Ascending aorta (tissue), 2 donors: ENCODE measurements at regions of chr2 and their contacts with region 1.

Region 1: DNA sequence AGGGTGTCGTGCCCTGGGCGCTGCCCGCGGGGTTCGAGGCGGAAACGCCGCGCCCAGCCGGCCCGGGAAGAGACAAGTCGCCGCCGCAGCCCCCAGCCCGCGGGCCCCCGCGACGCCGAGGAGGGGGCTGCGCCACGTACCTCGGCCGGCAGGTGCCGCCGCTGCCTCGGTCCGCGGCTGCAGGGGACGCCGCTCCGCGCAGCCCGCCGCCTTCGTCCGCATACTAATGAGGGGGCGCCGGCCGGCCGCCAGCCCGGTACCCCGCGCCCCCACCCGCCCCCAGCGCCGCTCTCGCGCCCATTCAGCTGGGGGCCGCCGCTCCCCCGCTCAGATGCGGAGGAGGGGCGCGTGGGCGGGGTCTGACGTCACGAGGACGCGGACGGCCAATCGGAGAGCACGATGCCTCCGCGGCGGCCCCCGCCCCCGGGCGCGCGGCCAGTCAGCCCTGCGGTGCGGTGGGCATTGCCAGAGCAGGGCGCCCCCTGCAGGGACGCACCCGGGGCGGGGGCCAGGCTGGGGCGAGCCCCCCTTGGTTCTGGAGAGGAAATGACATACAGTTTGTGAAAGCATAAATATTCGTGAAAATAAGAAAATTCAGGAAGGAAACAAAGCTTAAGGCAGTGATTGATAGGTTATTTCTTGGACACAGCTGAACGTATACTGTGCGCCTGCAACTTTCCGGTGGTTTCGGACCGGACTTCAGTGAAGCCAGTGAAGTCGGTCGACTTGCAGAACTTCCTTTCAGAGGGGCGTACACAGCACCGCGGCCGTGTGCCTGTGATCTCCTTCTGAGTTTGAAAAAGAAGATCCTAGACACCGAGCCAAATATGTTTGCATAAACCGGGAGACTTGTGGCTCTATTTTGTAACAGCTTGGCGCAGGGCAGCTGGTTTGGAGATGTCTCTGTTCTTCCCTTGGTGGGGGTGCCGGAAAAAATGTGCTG is at the start of gene ST3GAL5:
- DNase-seq: peak; percentile 52 to 94
- H3K4me3 ChIP-seq: peak within 1 kb of the TSS; percentile 85 to 95
- H3K27ac ChIP-seq: peak within 1 kb of the TSS; percentile 85 to 88
- H3K4me1 ChIP-seq: peaks cover 4 to 36% of the 10 kb centered on the region in 2 donors
- H3K27me3 ChIP-seq: no peaks in the 10 kb centered on the region
- CTCF ChIP-seq: peak; percentile 57 to 72 (median 58)
- total RNA-seq, gene ST3GAL5: 21.0 TPM

Region 2: DNA sequence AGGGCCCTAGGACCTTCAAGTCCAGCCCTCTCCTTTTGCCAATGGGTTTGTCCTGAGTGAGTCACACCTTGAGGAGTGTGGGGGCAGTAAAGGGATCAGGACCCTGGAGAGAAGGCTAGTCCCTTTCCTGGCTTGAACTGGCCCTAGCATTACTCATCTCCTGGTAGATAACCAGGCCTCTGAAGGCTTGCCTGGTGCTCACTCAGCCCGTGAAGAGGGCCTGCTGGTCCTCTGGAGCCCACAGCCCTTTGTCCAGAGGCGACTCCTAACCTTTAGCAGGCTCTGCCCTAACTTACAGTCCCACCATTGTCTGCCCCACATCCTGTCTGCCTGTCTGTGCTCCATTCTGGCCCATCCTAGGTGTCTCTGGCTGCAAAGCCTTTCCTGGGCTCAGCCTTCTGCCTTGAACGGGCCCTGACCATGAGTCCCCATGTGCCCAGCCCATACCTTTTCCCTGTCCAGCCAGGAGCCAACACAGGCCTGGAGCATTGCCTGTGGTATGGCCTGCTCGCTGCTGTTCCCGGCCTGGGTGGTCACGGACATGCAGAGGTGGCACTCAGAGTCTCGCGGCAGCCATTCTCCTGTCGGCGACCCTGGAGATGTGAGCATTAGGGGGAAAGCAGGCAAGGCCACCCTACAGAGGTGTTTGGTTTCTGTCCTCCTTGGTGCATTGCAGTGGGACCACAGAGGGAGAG is 225.9 kb before region 1 on chr2:
- intact Hi-C with region 1: no loop called
- DNase-seq: peak in 1 of 2 donors; percentile 82
- H3K4me3 ChIP-seq: no peak overlapping the region
- H3K27ac ChIP-seq: peak overlapping the region; percentile 36 to 42
- H3K4me1 ChIP-seq: peaks cover 3% of the 10 kb centered on the region in 2 donors
- H3K27me3 ChIP-seq: no peaks in the 10 kb centered on the region
- CTCF ChIP-seq: no peak

Region 3: GRCh38 chr2:85728883-85729824 is 159.8 kb before region 1 on chr2:
- intact Hi-C with region 1: loop called (anchors 5 kb)
- DNase-seq: peak in 1 of 2 donors; percentile 95
- H3K4me3 ChIP-seq: no peak overlapping the region
- H3K27ac ChIP-seq: peak overlapping the region in 1 of 2 donors; percentile 37
- H3K4me1 ChIP-seq: peaks cover 0 to 11% of the 10 kb centered on the region in 2 donors
- H3K27me3 ChIP-seq: no peaks in the 10 kb centered on the region
- CTCF ChIP-seq: peak; percentile 95 to 99 (median 97)

Region 4: GRCh38 chr2:85826990-85827878 is 61.7 kb before region 1 on chr2:
- intact Hi-C with region 1: loop called (anchors 2 kb)
- DNase-seq: peak in 1 of 2 donors; percentile 85
- H3K4me3 ChIP-seq: peak overlapping the region in 1 of 2 donors; percentile 55
- H3K27ac ChIP-seq: no peak overlapping the region
- H3K4me1 ChIP-seq: no peaks in the 10 kb centered on the region
- H3K27me3 ChIP-seq: no peaks in the 10 kb centered on the region
- CTCF ChIP-seq: peak; percentile 89 to 95 (median 90)

Region 5: GRCh38 chr2:86020984-86021383 is 132.0 kb after region 1 on chr2:
- intact Hi-C with region 1: loop called (anchors 5 kb)
- DNase-seq: peak in 1 of 2 donors; percentile 84
- H3K4me3 ChIP-seq: no peak overlapping the region
- H3K27ac ChIP-seq: peak overlapping the region; percentile 31 to 38
- H3K4me1 ChIP-seq: peaks cover 0 to 16% of the 10 kb centered on the region in 2 donors
- H3K27me3 ChIP-seq: no peaks in the 10 kb centered on the region
- CTCF ChIP-seq: no peak

Region 6: DNA sequence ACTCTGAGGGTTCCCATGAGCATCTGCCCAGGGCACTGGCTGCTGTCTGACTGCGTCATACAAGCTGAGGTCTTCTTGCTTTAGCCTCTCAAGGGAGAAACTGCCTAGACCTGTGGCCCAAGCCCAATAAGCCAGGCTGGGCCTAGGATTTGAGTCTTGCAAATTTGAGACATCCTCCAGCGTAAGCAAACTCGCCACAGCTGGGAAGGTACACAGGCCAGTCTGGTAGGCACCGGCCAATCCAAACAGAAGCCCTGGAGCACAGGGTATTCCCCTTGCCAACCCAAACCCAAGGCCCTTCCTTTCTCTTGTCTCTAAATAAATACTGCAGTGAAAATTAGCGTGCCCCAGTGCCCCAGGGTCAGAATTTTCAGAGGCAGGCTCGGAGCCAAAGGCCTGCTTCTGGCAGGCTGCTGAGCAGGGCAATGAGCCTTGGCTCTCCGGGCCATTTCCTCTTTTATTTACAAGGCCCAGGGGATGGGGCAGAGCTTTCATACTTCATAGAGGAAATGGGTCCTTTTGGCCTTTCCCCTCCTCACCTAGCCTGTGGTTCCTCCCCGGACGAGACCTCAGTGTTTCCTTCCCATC is 183.4 kb after region 1 on chr2:
- intact Hi-C with region 1: loop called (anchors 2 kb)
- DNase-seq: peak in 1 of 2 donors; percentile 93
- H3K4me3 ChIP-seq: no peak overlapping the region
- H3K27ac ChIP-seq: peak overlapping the region; percentile 85 to 88
- H3K4me1 ChIP-seq: peaks cover 8 to 16% of the 10 kb centered on the region in 2 donors
- H3K27me3 ChIP-seq: no peaks in the 10 kb centered on the region
- CTCF ChIP-seq: no peak